Activated CD4-positive, alpha-beta memory T cell treated with anti-CD3 and anti-CD28 coated beads for 36 hours (primary cell): ENCODE measurements at regions of chr5 and their contacts with region 1.

Region 1: GRCh38 chr5:43008369-43009153 is 31.6 kb downstream of the ANXA2R start:
- DNase-seq: peak; percentile 93
- H3K4me3 Mint-ChIP-seq: peak overlapping the region; percentile 81
- H3K27ac Mint-ChIP-seq: peak overlapping the region; percentile 88
- H3K4me1 Mint-ChIP-seq: peaks cover 26% of the 10 kb centered on the region
- H3K27me3 Mint-ChIP-seq: no peaks in the 10 kb centered on the region

Region 2: GRCh38 chr5:42950440-42951292 is 57.9 kb before region 1 on chr5:
- CTCF ChIA-PET with region 1: interaction called, 17 read pairs
- POLR2A ChIA-PET with region 1: interaction called, 17 read pairs
- intact Hi-C with region 1: loop called (anchors 1 kb)
- DNase-seq: peak; percentile 86
- H3K4me3 Mint-ChIP-seq: peak overlapping the region; percentile 94
- H3K27ac Mint-ChIP-seq: peak overlapping the region; percentile 97
- H3K4me1 Mint-ChIP-seq: peaks cover 30% of the 10 kb centered on the region
- H3K27me3 Mint-ChIP-seq: no peaks in the 10 kb centered on the region